ENCODE measurements at regions of chr4 and their contacts with region 1.

Region 1: GRCh38 chr4:7524064-7524682 is 89.4 kb upstream of the PSAPL1 start:
- DNase-seq: no peak
- H3K4me3 ChIP-seq: no peak overlapping the region
- H3K27ac ChIP-seq: no peak overlapping the region
- H3K4me1 ChIP-seq: no peaks in the 10 kb centered on the region
- H3K27me3 ChIP-seq: no peaks in the 10 kb centered on the region
- CTCF ChIP-seq: no peak
- POLR2A ChIP-seq: no peak

Region 2: GRCh38 chr4:6456450-6456849 is 1067.7 kb before region 1 on chr4:
- intact Hi-C with region 1: loop called (anchors 5 kb)
- DNase-seq: no peak
- H3K4me3 ChIP-seq: no peak overlapping the region
- H3K27ac ChIP-seq: no peak overlapping the region
- H3K4me1 ChIP-seq: no peaks in the 10 kb centered on the region
- H3K27me3 ChIP-seq: no peaks in the 10 kb centered on the region
- CTCF ChIP-seq: no peak
- POLR2A ChIP-seq: no peak

Region 3: GRCh38 chr4:7595934-7596461 is 71.8 kb after region 1 on chr4:
- intact Hi-C with region 1: no loop called
- DNase-seq: no peak
- H3K4me3 ChIP-seq: no peak overlapping the region
- H3K27ac ChIP-seq: no peak overlapping the region
- H3K4me1 ChIP-seq: peaks cover 20 to 26% of the 10 kb centered on the region in 2 donors
- H3K27me3 ChIP-seq: no peaks in the 10 kb centered on the region
- CTCF ChIP-seq: no peak
- POLR2A ChIP-seq: no peak

Region 4: DNA sequence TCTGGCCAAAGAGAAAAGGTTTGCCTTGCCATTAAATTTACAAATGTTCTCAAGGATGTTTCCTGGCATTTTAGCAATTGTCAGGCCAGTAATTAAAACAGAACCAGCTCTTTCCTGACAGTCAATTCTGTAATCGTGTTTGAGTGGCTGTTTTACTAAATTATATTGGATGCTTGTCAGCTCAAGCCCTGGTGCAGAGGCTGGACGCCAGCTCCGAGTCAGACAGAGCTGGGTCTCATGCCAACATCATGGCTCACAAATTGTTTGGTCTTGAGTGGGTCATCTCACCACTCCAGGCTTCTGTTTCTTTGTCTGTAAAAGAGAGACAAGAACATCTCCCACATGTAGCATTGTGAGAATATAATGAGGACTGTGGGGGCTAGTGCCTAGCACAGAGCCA is 100.9 kb after region 1 on chr4:
- intact Hi-C with region 1: no loop called
- DNase-seq: no peak
- H3K4me3 ChIP-seq: no peak overlapping the region
- H3K27ac ChIP-seq: no peak overlapping the region
- H3K4me1 ChIP-seq: no peaks in the 10 kb centered on the region
- H3K27me3 ChIP-seq: no peaks in the 10 kb centered on the region
- CTCF ChIP-seq: no peak
- POLR2A ChIP-seq: no peak

Measured in thyroid gland (tissue), 4 donors.